ENCODE measurements at regions of chr4 and their contacts with region 1.

Region 1: GRCh38 chr4:6695660-6696630 is 2.3 kb downstream of the S100P start:
- DNase-seq: peak; percentile 96
- ATAC-seq: peak; percentile 87
- H3K4me3 ChIP-seq: peak overlapping the region; percentile 82 to 96 (median 83)
- H3K27ac ChIP-seq: peak overlapping the region; percentile 84
- H3K4me1 ChIP-seq: peaks cover 60% of the 10 kb centered on the region
- H3K27me3 ChIP-seq: no peaks in the 10 kb centered on the region; a peak in 1 of 5 replicates
- CTCF ChIP-seq: peak; percentile 66
- EP300 ChIP-seq: peak; percentile 74 to 84
- POLR2A ChIP-seq: peak in 1 of 2 experiments; percentile 67; a peak in 2 of 4 replicates
- RAD21 ChIP-seq: peak; percentile 70

Region 2: DNA sequence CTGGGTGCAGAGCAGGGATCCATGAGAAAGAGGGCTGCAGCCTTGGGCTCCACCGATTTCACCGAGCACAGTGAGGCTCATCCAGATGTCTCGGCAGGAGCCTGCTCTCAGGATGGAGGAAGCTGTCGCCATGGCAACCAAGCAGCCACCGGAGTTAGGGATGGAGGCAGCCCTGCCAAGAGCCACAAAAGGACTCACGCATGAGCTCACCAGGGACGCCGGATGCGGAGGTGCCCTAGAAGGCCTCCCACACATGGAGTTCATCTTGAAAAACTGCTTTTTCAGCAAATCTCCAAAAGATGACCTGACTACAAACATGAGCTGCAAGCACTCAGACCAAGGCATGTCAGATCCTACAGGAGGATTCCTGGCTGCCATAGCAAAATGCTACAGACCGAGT is 335.6 kb before region 1 on chr4:
- CTCF ChIA-PET with region 1: no interaction called
- POLR2A ChIA-PET with region 1: no interaction called
- in situ Hi-C with region 1: no loop called
- intact Hi-C with region 1: no loop called
- DNase-seq: no peak
- ATAC-seq: no peak
- H3K4me3 ChIP-seq: no peak overlapping the region
- H3K27ac ChIP-seq: no peak overlapping the region
- H3K4me1 ChIP-seq: no peaks in the 10 kb centered on the region
- H3K27me3 ChIP-seq: peaks cover 1 to 24% of the 10 kb centered on the region in 2 experiments; a peak in 3 of 5 replicates
- CTCF ChIP-seq: no peak
- EP300 ChIP-seq: no peak
- POLR2A ChIP-seq: no peak
- RAD21 ChIP-seq: no peak

Region 3: GRCh38 chr4:6640292-6641163 is 55.4 kb before region 1 on chr4 and contains the start of gene MRFAP1:
- CTCF ChIA-PET with region 1: no interaction called
- POLR2A ChIA-PET with region 1: interaction called, 24 read pairs
- in situ Hi-C with region 1: no loop called
- intact Hi-C with region 1: no loop called
- DNase-seq: peak; percentile 86
- ATAC-seq: peak; percentile 91
- H3K4me3 ChIP-seq: peak within 1 kb of the TSS; percentile 67 to 91 (median 74)
- H3K27ac ChIP-seq: peak within 1 kb of the TSS; percentile 84
- H3K4me1 ChIP-seq: peaks cover 38% of the 10 kb centered on the region
- H3K27me3 ChIP-seq: no peaks in the 10 kb centered on the region; a peak in 1 of 5 replicates
- CTCF ChIP-seq: no peak
- EP300 ChIP-seq: no peak; a peak in 1 of 4 replicates
- POLR2A ChIP-seq: peak; percentile 83 to 94
- RAD21 ChIP-seq: no peak
- total RNA-seq, gene MRFAP1: 158 and 254 TPM in 2 replicates

Region 4: GRCh38 chr4:6709230-6710114 is 13.5 kb after region 1 on chr4 and contains the start of gene MRFAP1L1:
- CTCF ChIA-PET with region 1: no interaction called
- POLR2A ChIA-PET with region 1: interaction called, 40 read pairs
- in situ Hi-C with region 1: no loop called
- intact Hi-C with region 1: no loop called
- DNase-seq: peak; percentile 91
- ATAC-seq: peak; percentile 88
- H3K4me3 ChIP-seq: peak within 1 kb of the TSS; percentile 64 to 92 (median 90)
- H3K27ac ChIP-seq: peak within 1 kb of the TSS; percentile 65
- H3K4me1 ChIP-seq: peaks cover 51% of the 10 kb centered on the region
- H3K27me3 ChIP-seq: peaks cover 0 to 6% of the 10 kb centered on the region in 2 experiments; a peak in 1 of 5 replicates
- CTCF ChIP-seq: peak; percentile 26; the same call in 1 of the 2 replicates
- EP300 ChIP-seq: peak in 1 of 2 experiments; percentile 44; a peak in 1 of 4 replicates
- POLR2A ChIP-seq: peak in 1 of 2 experiments; percentile 65; a peak in 2 of 4 replicates
- RAD21 ChIP-seq: no peak
- total RNA-seq, gene MRFAP1L1: 76.6 and 124 TPM in 2 replicates

Region 5: DNA sequence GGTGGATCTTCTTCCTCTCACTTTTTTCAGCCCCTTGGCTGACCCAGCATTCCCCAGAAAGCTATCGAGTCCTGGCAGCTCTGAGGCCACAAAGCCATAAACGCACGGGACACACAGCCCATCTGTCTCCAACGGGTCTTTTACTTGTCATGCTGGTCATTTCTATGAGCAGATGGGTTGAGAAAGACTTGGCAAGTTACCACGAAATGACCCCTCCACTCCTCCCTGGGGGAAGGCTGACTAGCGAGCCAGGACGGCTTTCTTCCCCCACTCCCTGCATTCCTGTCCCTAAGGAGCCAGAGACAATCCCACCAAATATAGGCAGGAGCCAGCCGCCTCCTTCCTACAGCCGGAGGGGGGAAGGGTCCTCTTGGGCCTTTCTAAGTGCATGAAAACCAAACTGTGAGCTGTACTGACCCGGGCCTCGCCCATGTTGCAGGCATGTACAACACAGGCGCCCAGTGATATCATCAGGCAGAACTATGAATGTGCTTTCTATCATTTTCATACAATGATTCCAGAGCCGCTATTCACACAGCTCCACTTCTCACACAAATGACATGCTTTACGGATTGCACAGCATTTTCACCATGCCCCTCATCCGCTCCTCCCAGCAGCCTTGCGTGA is 1215.1 kb after region 1 on chr4:
- CTCF ChIA-PET with region 1: no interaction called
- POLR2A ChIA-PET with region 1: no interaction called
- in situ Hi-C with region 1: no loop called
- intact Hi-C with region 1: no loop called
- DNase-seq: no peak
- ATAC-seq: no peak
- H3K4me3 ChIP-seq: no peak overlapping the region
- H3K27ac ChIP-seq: no peak overlapping the region
- H3K4me1 ChIP-seq: peaks cover 47% of the 10 kb centered on the region
- H3K27me3 ChIP-seq: no peaks in the 10 kb centered on the region
- CTCF ChIP-seq: no peak
- EP300 ChIP-seq: no peak
- POLR2A ChIP-seq: no peak
- RAD21 ChIP-seq: no peak